AG04449 (cell line): ENCODE measurements at regions of chr18 and their contacts with region 1.

Region 1: GRCh38 chr18:63518178-63519012 is 23.8 kb upstream of the SERPINB12 start:
- DNase-seq: peak; percentile 36
- H3K4me3 ChIP-seq: no peak overlapping the region
- CTCF ChIP-seq: peak; percentile 59

Region 2: GRCh38 chr18:63487676-63488075 is 30.7 kb before region 1 on chr18:
- CTCF ChIA-PET with region 1: interaction called, 12 read pairs
- POLR2A ChIA-PET with region 1: no interaction called
- DNase-seq: no peak
- H3K4me3 ChIP-seq: no peak overlapping the region
- CTCF ChIP-seq: no peak

Region 3: GRCh38 chr18:63534615-63535014 is 16.2 kb after region 1 on chr18:
- CTCF ChIA-PET with region 1: interaction called, 63 read pairs
- POLR2A ChIA-PET with region 1: no interaction called
- DNase-seq: no peak
- H3K4me3 ChIP-seq: no peak overlapping the region
- CTCF ChIP-seq: no peak

Region 4: DNA sequence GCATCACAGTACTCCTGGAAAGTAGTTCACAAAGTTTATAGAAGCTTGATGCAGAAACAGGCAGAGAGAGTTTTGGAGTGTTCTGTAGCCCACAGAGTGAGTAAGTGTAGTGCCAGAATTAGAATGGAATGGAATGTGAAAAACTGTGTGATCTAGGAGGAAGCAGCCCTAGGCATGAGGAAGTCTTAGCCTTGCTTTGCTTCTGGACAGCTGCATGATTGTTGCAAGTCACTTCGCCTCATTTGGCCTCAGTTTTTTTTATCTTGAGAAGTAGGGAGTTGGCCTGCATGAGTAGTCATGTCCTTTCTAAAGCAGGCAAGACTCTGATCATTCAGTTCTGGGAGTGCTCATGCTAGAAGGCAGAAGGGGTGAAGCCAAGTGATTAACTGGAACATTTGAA is 34.7 kb after region 1 on chr18:
- CTCF ChIA-PET with region 1: interaction called, 19 read pairs
- POLR2A ChIA-PET with region 1: no interaction called
- DNase-seq: peak; percentile 95
- H3K4me3 ChIP-seq: no peak overlapping the region
- CTCF ChIP-seq: no peak

Region 5: DNA sequence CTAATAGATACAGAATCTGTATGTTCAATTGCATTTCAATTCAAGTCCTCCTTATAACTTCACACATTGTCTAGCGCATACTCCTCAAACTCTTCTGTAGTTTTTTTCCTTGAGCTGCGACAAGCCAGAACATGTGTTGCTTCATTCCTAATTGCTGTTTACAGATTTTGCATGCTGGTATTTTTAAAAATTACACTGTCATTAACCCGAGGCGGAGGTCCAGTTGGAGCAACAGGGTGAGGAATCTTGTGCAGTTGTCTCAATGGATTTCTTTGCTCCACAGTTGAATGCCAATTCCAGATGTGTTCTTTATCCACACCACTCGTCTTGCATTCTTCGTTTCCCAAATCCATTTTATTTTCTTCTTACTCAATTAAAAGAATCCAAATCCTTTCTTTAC is 52.3 kb after region 1 on chr18:
- CTCF ChIA-PET with region 1: interaction called, 724 read pairs
- POLR2A ChIA-PET with region 1: no interaction called
- DNase-seq: no peak
- H3K4me3 ChIP-seq: no peak overlapping the region
- CTCF ChIP-seq: no peak

Region 6: DNA sequence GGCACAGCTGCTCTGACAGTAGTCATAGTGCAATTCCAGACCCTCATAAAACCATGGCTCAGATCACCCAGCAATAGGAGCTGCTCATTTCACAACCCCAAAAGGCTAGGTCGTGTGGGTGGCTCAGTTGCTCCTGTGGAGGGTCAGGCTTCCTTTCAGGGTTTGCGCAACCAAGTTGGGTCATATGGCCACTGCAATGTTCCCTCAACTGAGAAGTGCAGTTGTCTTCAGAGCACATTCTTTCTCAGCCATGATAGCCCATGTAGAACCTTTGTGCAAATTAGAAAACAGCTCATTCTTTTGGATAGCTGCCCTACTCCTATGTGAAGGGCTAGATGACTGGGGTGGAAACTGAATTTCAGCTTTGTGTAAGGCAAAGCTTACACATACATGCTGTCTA is 72.0 kb after region 1 on chr18:
- CTCF ChIA-PET with region 1: interaction called, 724 read pairs
- POLR2A ChIA-PET with region 1: interaction called, 3 read pairs
- DNase-seq: no peak
- H3K4me3 ChIP-seq: no peak overlapping the region
- CTCF ChIP-seq: no peak

Region 7: GRCh38 chr18:63848159-63848558 is 329.8 kb after region 1 on chr18:
- CTCF ChIA-PET with region 1: interaction called, 555 read pairs
- POLR2A ChIA-PET with region 1: interaction called, 3 read pairs
- DNase-seq: no peak
- H3K4me3 ChIP-seq: no peak overlapping the region
- CTCF ChIP-seq: peak; percentile 57